A673 (cell line): ENCODE measurements at regions of chrX and their contacts with region 1.

Region 1: GRCh38 chrX:103175944-103176753 is 38.8 kb upstream of the BEX4 start:
- DNase-seq: peak; percentile 66
- H3K4me3 ChIP-seq: peak overlapping the region; percentile 35
- H3K27ac ChIP-seq: no peak overlapping the region
- H3K4me1 ChIP-seq: no peaks in the 10 kb centered on the region
- H3K27me3 ChIP-seq: no peaks in the 10 kb centered on the region
- CTCF ChIP-seq: peak; percentile 90

Region 2: DNA sequence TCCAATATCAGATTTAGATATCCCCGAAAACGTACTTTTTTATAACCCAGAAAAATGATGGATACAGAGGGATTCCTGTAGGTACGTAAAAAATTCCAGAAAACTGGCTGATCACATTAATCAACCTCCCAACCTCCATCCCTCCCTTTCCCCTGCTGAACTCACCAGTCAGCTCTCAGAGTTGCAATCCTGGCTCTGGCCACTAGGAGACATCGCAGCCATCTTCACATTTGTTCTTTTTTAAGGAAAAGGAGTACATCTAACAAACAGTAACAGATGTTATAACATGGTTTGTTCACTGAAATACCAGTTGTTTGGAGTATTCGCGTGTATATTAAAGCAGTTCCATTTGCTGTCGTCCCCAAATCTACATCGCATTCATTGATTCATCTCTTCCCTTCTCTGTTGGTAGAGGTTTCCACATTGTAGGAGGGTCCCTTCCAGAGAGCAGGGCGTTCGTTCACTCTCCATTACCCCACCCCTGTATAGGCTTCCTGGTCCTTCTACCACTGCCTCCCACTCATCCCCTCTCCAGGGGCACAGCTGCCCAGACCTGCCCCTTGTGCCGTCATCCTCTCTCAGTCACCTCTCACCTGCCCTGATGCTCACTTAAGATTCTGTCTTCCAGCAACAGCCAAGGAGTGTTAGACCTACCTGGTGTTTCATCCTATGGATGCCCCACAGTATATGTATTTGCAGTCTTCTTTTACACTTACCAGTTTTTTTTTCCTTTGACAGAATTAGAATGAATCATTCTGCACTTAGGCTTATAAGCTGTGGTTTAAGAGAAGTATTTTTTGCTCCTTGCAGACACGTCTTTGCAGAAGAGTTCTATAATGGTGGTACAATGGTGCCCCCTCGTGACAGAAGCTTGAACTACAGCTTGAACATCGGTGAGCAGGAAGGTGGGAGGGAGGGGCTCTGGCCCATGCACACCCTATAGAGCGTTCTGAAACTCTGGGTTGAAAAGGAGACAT is 275.9 kb before region 1 on chrX:
- CTCF ChIA-PET with region 1: no interaction called
- POLR2A ChIA-PET with region 1: no interaction called
- intact Hi-C with region 1: loop called (anchors 1 kb)
- DNase-seq: peak; percentile 78
- H3K4me3 ChIP-seq: no peak overlapping the region
- H3K27ac ChIP-seq: no peak overlapping the region
- H3K4me1 ChIP-seq: no peaks in the 10 kb centered on the region
- H3K27me3 ChIP-seq: no peaks in the 10 kb centered on the region
- CTCF ChIP-seq: peak; percentile 72